B cell (primary cell): ENCODE measurements at regions of chr5 and their contacts with region 1.

Region 1: GRCh38 chr5:131589510-131590348 is 45.3 kb downstream of the RAPGEF6 start:
- DNase-seq: peak; percentile 75
- ATAC-seq: peak; percentile 54
- H3K4me3 ChIP-seq: no peak overlapping the region
- H3K4me3 Mint-ChIP-seq: no peak overlapping the region
- H3K27ac ChIP-seq: peak overlapping the region in 1 of 2 donors; percentile 4
- H3K27ac Mint-ChIP-seq: no peak overlapping the region
- H3K4me1 ChIP-seq: peaks cover 13 to 19% of the 10 kb centered on the region in 2 donors
- H3K4me1 Mint-ChIP-seq: peaks cover 23% of the 10 kb centered on the region
- H3K27me3 ChIP-seq: no peaks in the 10 kb centered on the region
- H3K27me3 Mint-ChIP-seq: no peaks in the 10 kb centered on the region
- CTCF ChIP-seq: peak; percentile 96

Region 2: GRCh38 chr5:131536211-131536826 is 53.4 kb before region 1 on chr5:
- CTCF ChIA-PET with region 1: interaction called, 10 read pairs
- POLR2A ChIA-PET with region 1: no interaction called
- intact Hi-C with region 1: no loop called
- DNase-seq: peak; percentile 92
- ATAC-seq: peak; percentile 88
- H3K4me3 ChIP-seq: peak overlapping the region in 3 of 5 experiments; percentile 27 to 35 (median 35)
- H3K4me3 Mint-ChIP-seq: peak overlapping the region; percentile 60
- H3K27ac ChIP-seq: peak overlapping the region; percentile 82 to 96
- H3K27ac Mint-ChIP-seq: peak overlapping the region; percentile 87
- H3K4me1 ChIP-seq: peaks cover 18 to 19% of the 10 kb centered on the region in 2 donors
- H3K4me1 Mint-ChIP-seq: peaks cover 42% of the 10 kb centered on the region
- H3K27me3 ChIP-seq: no peaks in the 10 kb centered on the region
- H3K27me3 Mint-ChIP-seq: no peaks in the 10 kb centered on the region
- CTCF ChIP-seq: no peak

Region 3: DNA sequence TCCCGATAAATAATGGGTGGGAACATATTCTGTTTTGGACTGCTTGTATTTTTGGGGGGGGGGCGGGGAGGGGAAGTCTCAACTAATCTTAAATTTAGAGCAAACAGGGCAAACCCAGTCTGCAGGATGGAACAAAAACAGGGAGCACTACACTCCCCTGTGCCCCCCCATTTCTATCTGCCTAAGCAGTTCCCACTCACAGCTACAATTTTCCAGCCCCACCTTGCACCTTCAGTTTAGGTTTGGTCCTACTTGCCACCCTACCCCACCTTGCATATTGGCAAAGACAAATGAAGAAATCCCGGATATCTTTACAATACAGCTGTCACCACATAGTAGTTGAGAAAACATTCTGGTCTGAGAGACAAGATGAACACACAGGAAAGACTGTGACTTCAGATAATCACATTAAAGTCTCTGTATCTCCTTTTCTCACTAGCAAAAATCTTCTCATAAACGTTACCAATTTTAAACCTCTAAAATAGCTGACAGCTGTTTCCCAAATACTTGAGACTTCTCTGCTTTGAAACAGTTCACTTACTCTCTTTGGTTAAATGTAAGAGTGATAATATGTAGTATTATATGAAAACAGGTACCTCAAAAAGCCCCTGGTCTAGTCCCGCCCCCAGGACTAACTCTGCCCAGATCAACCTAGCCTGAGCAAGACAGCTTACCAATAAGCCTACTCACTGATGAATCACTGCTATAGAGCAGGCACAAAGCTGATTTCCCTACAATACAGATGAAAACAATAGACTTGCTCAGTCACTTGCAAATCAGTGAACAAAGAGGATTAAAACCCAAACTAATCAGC is 50.5 kb after region 1 on chr5:
- CTCF ChIA-PET with region 1: interaction called, 33 read pairs
- POLR2A ChIA-PET with region 1: no interaction called
- intact Hi-C with region 1: loop called (anchors 2 kb)
- DNase-seq: peak; percentile 57
- ATAC-seq: peak; percentile 81
- H3K4me3 ChIP-seq: no peak overlapping the region
- H3K4me3 Mint-ChIP-seq: peak overlapping the region; percentile 72
- H3K27ac ChIP-seq: peak overlapping the region; percentile 54 to 78
- H3K27ac Mint-ChIP-seq: peak overlapping the region; percentile 89
- H3K4me1 ChIP-seq: peaks cover 24 to 30% of the 10 kb centered on the region in 2 donors
- H3K4me1 Mint-ChIP-seq: peaks cover 41% of the 10 kb centered on the region
- H3K27me3 ChIP-seq: no peaks in the 10 kb centered on the region
- H3K27me3 Mint-ChIP-seq: no peaks in the 10 kb centered on the region
- CTCF ChIP-seq: no peak

Region 4: GRCh38 chr5:131709043-131709442 is 119.3 kb after region 1 on chr5:
- CTCF ChIA-PET with region 1: interaction called, 16 read pairs
- POLR2A ChIA-PET with region 1: no interaction called
- intact Hi-C with region 1: no loop called
- DNase-seq: no peak
- ATAC-seq: no peak
- H3K4me3 ChIP-seq: no peak overlapping the region
- H3K4me3 Mint-ChIP-seq: no peak overlapping the region
- H3K27ac ChIP-seq: no peak overlapping the region
- H3K27ac Mint-ChIP-seq: no peak overlapping the region
- H3K4me1 ChIP-seq: no peaks in the 10 kb centered on the region
- H3K4me1 Mint-ChIP-seq: no peaks in the 10 kb centered on the region
- H3K27me3 ChIP-seq: no peaks in the 10 kb centered on the region
- H3K27me3 Mint-ChIP-seq: no peaks in the 10 kb centered on the region
- CTCF ChIP-seq: no peak

Region 5: DNA sequence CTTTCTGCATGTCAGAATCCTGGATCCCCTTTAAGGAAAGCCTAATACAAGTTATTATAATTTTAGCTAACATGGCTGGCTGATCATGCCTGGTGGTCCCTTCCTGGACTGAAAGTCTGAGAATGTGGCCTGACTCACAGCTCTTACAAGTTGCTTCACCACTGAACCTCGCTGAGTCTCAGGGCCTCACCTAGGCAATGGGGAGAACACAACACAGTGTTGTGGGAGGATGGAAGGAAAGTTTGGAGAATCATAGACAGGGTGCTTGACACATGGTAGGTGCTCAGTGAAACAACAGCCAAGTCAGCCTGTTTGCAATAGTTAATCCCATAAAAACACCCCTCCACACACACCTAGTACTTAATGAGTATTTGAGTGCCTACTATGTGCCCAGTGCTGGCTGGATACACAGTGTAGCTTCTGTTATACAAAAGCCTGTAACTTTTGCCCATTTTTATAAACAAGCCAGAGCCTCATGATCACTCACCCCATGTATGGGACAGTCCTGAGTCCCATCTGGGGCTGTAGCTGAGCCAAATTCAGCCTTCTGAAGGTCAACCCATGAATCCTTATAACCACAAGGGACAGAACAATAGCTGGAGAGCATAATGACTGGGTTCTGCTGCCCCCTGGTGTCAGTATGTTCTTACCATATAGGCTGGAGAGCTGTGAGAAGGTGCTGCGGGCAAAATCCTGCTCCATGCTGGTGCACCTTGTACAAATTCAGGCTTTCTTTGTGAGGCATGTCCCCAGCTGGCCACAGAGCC is 417.9 kb after region 1 on chr5:
- CTCF ChIA-PET with region 1: interaction called, 405 read pairs
- POLR2A ChIA-PET with region 1: interaction called, 5 read pairs
- intact Hi-C with region 1: no loop called
- DNase-seq: peak; percentile 80
- ATAC-seq: peak; percentile 51
- H3K4me3 ChIP-seq: no peak overlapping the region
- H3K4me3 Mint-ChIP-seq: no peak overlapping the region
- H3K27ac ChIP-seq: no peak overlapping the region
- H3K27ac Mint-ChIP-seq: no peak overlapping the region
- H3K4me1 ChIP-seq: peaks cover 12% of the 10 kb centered on the region in 2 donors
- H3K4me1 Mint-ChIP-seq: peaks cover 14% of the 10 kb centered on the region
- H3K27me3 ChIP-seq: peaks cover 0 to 37% (median 16%) of the 10 kb centered on the region in 4 experiments
- H3K27me3 Mint-ChIP-seq: peaks cover 30% of the 10 kb centered on the region
- CTCF ChIP-seq: peak; percentile 79